ENCODE measurements at regions of chr20 and their contacts with region 1.

Region 1: GRCh38 chr20:48657475-48658470 is 170.0 kb downstream of the PREX1 start:
- DNase-seq: peak; percentile 85
- H3K4me3 ChIP-seq: no peak overlapping the region
- H3K27ac ChIP-seq: no peak overlapping the region
- H3K4me1 ChIP-seq: no peaks in the 10 kb centered on the region
- H3K27me3 ChIP-seq: no peaks in the 10 kb centered on the region
- CTCF ChIP-seq: peak; percentile 92 to 95 (median 92)
- POLR2A ChIP-seq: no peak

Region 2: GRCh38 chr20:48904365-48905296 is 246.9 kb after region 1 on chr20:
- intact Hi-C with region 1: loop called (anchors 2 kb)
- DNase-seq: peak; percentile 74
- H3K4me3 ChIP-seq: no peak overlapping the region
- H3K27ac ChIP-seq: no peak overlapping the region
- H3K4me1 ChIP-seq: no peaks in the 10 kb centered on the region
- H3K27me3 ChIP-seq: no peaks in the 10 kb centered on the region
- CTCF ChIP-seq: peak; percentile 77 to 91 (median 90)
- POLR2A ChIP-seq: no peak

Region 3: DNA sequence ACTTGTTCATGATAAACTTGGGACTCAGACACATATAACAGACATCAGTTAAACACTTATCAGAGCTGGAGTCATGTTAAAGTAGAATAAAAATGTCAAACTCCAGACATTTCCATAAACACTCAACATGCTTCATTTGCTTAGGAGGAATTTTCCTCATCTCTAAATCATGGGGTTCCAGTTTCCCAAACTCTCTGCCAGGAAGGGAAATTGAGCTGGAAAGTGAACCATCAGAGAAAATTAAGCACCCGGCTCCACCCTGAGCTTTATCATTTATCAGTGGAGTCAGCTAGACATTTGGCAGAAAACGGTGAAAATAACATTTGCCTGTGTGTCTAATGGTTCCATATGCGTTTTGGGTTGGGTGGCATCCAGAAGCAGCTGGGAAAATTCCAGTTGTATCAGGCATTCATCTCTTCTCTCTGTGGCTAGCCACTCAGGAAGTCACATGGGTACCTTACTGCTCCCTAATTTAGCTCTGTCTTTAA is 645.3 kb after region 1 on chr20:
- intact Hi-C with region 1: no loop called
- DNase-seq: no peak
- H3K4me3 ChIP-seq: no peak overlapping the region
- H3K27ac ChIP-seq: no peak overlapping the region
- H3K4me1 ChIP-seq: no peaks in the 10 kb centered on the region
- H3K27me3 ChIP-seq: no peaks in the 10 kb centered on the region
- CTCF ChIP-seq: no peak
- POLR2A ChIP-seq: no peak